A673 (cell line): ENCODE measurements at regions of chr11 and their contacts with region 1.

Region 1: GRCh38 chr11:122505304-122506006 is 150.1 kb upstream of the UBASH3B start:
- DNase-seq: peak; percentile 88
- H3K4me3 ChIP-seq: no peak overlapping the region
- H3K27ac ChIP-seq: no peak overlapping the region
- H3K4me1 ChIP-seq: peaks cover 3% of the 10 kb centered on the region
- H3K27me3 ChIP-seq: no peaks in the 10 kb centered on the region
- CTCF ChIP-seq: peak; percentile 93

Region 2: DNA sequence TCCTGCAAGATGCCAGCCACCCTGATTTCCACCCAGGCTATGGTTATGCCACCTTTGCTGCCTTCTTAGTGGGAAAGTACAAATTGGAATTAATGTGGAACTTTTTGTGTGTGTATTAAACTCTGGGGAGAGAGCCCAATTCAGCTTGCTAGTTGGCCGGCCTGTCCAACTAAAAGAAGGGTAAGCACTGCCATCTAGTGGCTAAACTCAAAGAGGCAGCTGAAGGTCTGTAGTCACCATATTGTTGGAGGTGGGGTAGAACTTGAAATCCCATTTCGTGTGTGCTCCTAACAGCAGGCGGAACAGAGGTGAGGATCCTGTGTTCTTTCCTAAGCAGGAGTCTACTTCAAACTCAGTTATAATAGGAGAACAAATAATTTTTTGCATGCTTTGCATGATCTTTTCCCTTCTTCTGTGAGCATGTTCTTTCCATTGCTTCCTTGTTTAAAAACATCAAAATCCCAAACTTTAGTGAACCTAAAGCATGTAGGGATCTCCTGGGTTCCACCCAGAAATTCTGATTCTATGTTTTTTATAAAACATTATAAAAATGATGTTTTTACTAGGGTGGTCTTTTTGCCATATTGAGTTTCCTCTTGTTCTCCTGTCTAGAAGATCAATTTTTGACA is 913.9 kb before region 1 on chr11:
- CTCF ChIA-PET with region 1: no interaction called
- POLR2A ChIA-PET with region 1: no interaction called
- intact Hi-C with region 1: loop called (anchors 5 kb)
- DNase-seq: peak; percentile 89
- H3K4me3 ChIP-seq: no peak overlapping the region
- H3K27ac ChIP-seq: no peak overlapping the region
- H3K4me1 ChIP-seq: peaks cover 11% of the 10 kb centered on the region
- H3K27me3 ChIP-seq: no peaks in the 10 kb centered on the region
- CTCF ChIP-seq: peak; percentile 93

Region 3: DNA sequence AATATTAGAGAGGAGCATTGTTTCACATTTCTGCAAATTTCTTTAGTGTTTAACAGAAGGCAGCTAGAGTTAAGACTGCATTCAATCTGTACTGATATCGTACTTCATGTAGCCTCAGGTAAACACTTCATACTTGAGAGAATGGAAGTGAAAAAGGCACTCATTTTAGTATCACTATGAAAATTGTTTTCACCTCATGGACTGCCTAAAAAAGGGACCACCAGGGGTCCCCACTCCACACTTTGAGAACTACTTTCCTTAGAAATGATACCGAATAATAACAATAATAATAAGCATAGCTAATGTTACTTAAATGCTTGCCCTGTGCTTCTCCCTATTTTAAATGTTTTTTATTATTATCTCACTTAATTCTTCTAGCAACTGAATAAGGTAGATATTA is 484.6 kb before region 1 on chr11:
- CTCF ChIA-PET with region 1: no interaction called
- POLR2A ChIA-PET with region 1: no interaction called
- intact Hi-C with region 1: loop called (anchors 1 kb)
- DNase-seq: peak; percentile 70
- H3K4me3 ChIP-seq: no peak overlapping the region
- H3K27ac ChIP-seq: no peak overlapping the region
- H3K4me1 ChIP-seq: peaks cover 7% of the 10 kb centered on the region
- H3K27me3 ChIP-seq: no peaks in the 10 kb centered on the region
- CTCF ChIP-seq: peak; percentile 82

Region 4: DNA sequence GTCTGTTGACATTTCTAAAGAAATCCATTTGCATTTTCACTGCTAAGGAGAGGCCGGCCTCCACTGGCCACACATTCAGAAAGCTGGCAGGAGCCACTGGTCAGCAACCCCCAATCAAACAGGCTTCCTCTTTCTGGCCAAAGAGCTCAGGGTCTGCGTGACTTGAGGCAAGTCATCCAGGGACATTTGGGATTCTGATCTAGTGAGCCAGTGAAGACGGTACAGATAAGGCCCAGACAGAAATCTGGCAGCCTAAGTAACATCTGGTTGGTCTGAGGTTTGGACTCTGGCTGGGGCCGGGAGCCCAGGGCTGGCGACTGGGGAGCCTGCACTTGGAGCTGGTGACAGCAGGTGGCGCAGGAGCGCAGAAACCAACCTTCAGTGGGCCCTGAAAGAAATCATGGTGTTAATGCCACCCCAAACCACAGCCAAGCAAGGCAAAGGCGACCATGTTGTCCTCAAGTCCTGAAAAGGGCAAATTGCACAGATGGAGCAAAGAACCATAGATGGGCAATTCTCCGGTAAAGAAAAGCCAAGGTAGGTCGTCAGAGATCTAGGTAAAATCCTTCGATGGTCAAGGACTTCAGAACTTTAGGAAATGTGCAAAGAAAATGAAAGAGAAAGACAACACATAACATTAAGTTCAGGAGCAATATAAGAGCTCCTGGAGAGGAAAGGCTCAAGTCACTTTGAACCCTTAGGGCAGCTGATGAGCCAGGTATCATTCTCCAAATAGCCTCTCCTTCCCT is 290.0 kb before region 1 on chr11:
- CTCF ChIA-PET with region 1: interaction called, 27 read pairs
- POLR2A ChIA-PET with region 1: no interaction called
- intact Hi-C with region 1: loop called (anchors 1 kb)
- DNase-seq: peak; percentile 84
- H3K4me3 ChIP-seq: no peak overlapping the region
- H3K27ac ChIP-seq: no peak overlapping the region
- H3K4me1 ChIP-seq: peaks cover 10% of the 10 kb centered on the region
- H3K27me3 ChIP-seq: no peaks in the 10 kb centered on the region
- CTCF ChIP-seq: peak; percentile 99